Activated CD8-positive, alpha-beta T cell treated with anti-CD3 and anti-CD28 coated beads, Interleukin-2, amount 10 ng/mL, durations not matched to agents 7 days and 5 days (primary cell): ENCODE measurements at regions of chr17 and their contacts with region 1.

Region 1: GRCh38 chr17:42067351-42068091 is 17.1 kb upstream of the C17orf113 start:
- DNase-seq: peak; percentile 79
- ATAC-seq: no peak
- H3K4me3 Mint-ChIP-seq: no peak overlapping the region
- H3K27ac Mint-ChIP-seq: no peak overlapping the region
- H3K4me1 Mint-ChIP-seq: peaks cover 42% of the 10 kb centered on the region
- H3K27me3 Mint-ChIP-seq: no peaks in the 10 kb centered on the region

Region 2: DNA sequence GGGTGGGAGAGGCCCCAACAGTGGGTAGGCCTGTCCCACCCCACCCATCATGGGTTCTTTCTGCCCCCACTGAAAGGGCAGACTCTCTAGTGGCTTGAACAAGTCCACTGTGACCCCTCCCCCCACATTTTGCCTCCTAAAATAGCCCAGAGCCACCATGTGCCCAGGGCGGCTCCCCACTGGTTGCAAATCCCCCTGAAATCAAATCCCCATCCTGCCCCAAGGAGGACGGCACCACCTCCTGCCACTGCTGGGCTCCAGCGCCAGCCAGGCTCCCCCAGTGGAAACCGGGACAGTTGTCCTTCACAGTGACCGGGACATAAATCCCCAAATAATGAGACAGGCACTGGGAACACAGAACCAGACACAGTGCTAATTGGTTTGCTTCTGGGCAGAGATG is 10.2 kb after region 1 on chr17:
- CTCF ChIA-PET with region 1: interaction called, 18 read pairs
- POLR2A ChIA-PET with region 1: no interaction called
- DNase-seq: no peak
- ATAC-seq: no peak
- H3K4me3 Mint-ChIP-seq: no peak overlapping the region
- H3K27ac Mint-ChIP-seq: no peak overlapping the region
- H3K4me1 Mint-ChIP-seq: peaks cover 11% of the 10 kb centered on the region
- H3K27me3 Mint-ChIP-seq: no peaks in the 10 kb centered on the region

Region 3: DNA sequence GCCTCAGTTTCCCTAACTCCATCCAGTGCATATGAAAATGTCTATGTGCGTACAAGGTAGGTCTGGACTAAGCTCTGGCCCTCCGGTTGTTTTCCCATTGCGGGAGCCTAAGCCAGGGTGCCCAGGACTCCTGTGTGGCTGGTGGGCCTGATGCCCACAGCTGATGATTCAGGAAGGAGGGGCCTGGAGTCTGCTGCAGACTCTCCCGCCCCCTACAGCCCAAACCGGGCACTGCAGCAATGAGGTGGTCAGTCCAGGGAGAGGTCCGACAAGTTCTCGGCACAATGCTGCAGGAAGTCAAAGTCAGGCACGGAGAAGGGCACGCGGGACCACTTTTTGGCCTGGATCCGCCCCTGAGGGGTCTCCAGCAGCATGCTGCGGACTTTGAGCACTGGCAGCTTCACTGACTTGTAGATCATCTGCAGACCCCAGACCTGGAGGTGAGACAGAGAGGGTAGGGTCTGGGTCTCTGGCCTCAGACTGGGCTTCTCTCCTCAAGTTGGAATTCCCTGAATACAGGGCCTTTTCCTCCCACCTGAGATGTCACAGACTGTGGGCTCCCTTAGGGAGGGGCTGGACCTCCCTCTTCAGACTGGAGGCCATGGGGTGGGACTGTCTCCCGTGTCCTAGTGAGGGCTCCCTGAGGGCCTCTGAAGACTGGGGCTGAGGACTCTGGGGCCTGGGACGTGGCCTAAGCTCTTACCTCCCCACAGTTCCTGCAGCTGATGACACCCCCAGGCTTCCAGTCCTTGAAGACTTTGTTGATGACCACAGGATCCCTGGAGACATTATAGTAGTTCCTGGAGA is 34.2 kb after region 1 on chr17:
- CTCF ChIA-PET with region 1: interaction called, 77 read pairs
- POLR2A ChIA-PET with region 1: interaction called, 3 read pairs
- DNase-seq: peak; percentile 75
- ATAC-seq: peak; percentile 66
- H3K4me3 Mint-ChIP-seq: no peak overlapping the region
- H3K27ac Mint-ChIP-seq: no peak overlapping the region
- H3K4me1 Mint-ChIP-seq: peaks cover 13% of the 10 kb centered on the region
- H3K27me3 Mint-ChIP-seq: peaks cover 14% of the 10 kb centered on the region

Region 4: GRCh38 chr17:42212382-42212781 is 144.9 kb after region 1 on chr17:
- CTCF ChIA-PET with region 1: no interaction called
- POLR2A ChIA-PET with region 1: no interaction called
- DNase-seq: no peak
- ATAC-seq: no peak
- H3K4me3 Mint-ChIP-seq: no peak overlapping the region
- H3K27ac Mint-ChIP-seq: no peak overlapping the region
- H3K4me1 Mint-ChIP-seq: no peaks in the 10 kb centered on the region
- H3K27me3 Mint-ChIP-seq: no peaks in the 10 kb centered on the region

Region 5: DNA sequence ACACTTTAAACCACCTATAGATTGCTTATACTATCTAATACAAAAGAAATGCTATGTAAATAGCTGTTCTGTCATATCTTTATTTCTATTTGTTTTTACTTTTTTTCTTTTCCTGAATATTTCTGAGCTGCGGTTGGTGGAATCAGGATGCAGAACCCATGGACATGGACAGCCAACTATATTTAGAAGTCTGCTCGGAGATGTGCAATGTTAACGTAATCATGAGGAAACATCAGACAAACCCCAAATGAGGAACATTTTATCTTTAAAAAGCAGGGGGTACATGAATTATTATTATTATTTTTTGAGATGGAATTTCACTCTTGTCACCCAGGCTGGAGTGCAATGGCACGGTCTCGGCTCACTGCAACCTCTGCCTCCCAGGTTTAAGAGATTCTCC is 158.1 kb after region 1 on chr17:
- CTCF ChIA-PET with region 1: no interaction called
- POLR2A ChIA-PET with region 1: no interaction called
- DNase-seq: no peak
- ATAC-seq: no peak
- H3K4me3 Mint-ChIP-seq: no peak overlapping the region
- H3K27ac Mint-ChIP-seq: no peak overlapping the region
- H3K4me1 Mint-ChIP-seq: peaks cover 10% of the 10 kb centered on the region
- H3K27me3 Mint-ChIP-seq: no peaks in the 10 kb centered on the region

Region 6: GRCh38 chr17:42322382-42323267 is 255.1 kb after region 1 on chr17:
- CTCF ChIA-PET with region 1: no interaction called
- POLR2A ChIA-PET with region 1: no interaction called
- DNase-seq: peak; percentile 98
- ATAC-seq: peak; percentile 93
- H3K4me3 Mint-ChIP-seq: no peak overlapping the region
- H3K27ac Mint-ChIP-seq: peak overlapping the region; percentile 75
- H3K4me1 Mint-ChIP-seq: peaks cover 45% of the 10 kb centered on the region
- H3K27me3 Mint-ChIP-seq: no peaks in the 10 kb centered on the region